MCF 10A (cell line): ENCODE measurements at regions of chr17 and their contacts with region 1.

Region 1: DNA sequence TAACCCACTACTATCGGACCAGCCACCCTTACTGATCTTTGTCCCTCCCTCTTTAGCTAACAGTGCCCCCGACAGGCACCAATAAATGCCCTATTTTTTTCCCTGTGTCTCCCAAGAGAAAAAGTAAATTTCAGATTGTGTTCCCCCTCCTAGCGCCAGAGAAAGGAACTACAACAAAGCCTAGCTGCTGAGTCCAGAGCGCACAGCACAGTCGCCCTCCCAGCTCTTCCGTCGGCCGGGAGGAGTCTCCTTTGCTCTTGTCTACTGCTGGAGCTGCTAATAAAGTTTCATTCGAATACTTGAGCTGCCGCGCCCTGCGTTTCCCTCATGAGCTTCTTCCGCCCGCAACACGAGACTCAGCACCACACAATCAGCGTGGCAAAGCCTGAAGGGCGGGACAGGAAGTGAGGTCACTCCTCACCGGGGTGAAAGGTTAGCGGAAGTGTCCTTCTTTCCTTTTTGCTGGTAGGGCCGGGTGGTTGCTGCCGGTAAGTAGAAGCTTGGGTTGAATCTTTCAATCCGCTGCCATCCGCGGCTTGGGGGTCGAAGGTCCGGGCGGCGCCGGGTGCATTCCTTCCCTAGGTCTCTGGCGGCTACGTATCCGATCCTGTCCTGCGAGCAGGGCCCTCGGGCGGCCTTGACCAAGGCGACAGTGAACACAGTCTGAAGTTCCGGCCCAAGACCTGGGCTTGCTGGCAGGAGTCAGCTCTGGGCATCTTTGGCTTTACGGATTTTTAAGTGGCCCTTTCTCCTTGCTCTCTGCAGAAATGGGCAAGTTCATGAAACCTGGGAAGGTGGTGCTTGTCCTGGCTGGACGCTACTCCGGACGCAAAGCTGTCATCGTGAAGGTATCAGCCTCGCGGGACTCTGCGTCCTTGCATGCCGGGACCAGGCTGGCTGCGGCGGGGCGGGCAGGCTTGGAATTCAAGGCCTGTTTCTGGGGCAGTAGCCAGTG is at the start of gene RPL27:
- DNase-seq: peak; percentile 99
- H3K4me3 Mint-ChIP-seq: peak within 1 kb of the TSS; percentile 95
- H3K27ac Mint-ChIP-seq: peak within 1 kb of the TSS; percentile 96
- H3K4me1 Mint-ChIP-seq: peaks cover 23% of the 10 kb centered on the region
- H3K27me3 Mint-ChIP-seq: no peaks in the 10 kb centered on the region
- CTCF ChIP-seq: peak; percentile 77
- total RNA-seq, gene RPL27: 970 and 1,226 TPM in 2 replicates

Region 2: GRCh38 chr17:42819944-42820535 is 178.2 kb before region 1 on chr17:
- CTCF ChIA-PET with region 1: interaction called, 7 read pairs
- POLR2A ChIA-PET with region 1: interaction called, 19 read pairs
- intact Hi-C with region 1: no loop called
- DNase-seq: peak; percentile 77
- H3K4me3 Mint-ChIP-seq: no peak overlapping the region
- H3K27ac Mint-ChIP-seq: no peak overlapping the region
- H3K4me1 Mint-ChIP-seq: peaks cover 2% of the 10 kb centered on the region
- H3K27me3 Mint-ChIP-seq: no peaks in the 10 kb centered on the region
- CTCF ChIP-seq: peak; percentile 67

Region 3: DNA sequence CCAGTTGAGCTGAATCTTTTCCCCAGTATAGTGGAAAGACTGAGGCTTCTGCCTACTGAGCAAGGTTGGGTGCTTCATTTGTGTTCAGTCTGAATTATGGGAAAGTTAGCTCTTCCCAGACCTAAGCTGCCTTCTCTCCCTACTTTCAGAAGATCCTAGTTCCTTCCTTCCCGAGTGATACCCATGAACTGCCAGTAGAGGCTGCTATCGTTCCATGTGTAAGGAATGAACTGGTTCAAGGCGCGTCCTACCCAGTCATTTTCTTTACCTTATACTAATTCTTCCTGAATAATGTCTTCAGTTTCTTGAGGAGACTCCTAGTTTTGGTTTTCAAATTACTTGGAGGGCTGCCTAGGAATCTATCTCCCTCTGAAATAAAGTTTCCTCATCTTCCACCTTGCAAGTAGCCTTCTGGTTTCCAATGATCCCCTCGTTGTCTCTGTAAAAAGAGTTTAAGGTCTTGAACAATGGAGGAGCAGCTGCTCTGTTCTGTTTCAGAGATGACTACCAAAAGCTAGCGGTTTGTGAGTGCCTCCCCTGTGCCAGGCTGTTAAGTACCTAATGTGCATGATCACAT is 154.8 kb before region 1 on chr17:
- CTCF ChIA-PET with region 1: interaction called, 17 read pairs
- POLR2A ChIA-PET with region 1: interaction called, 11 read pairs
- intact Hi-C with region 1: loop called (anchors 1 kb)
- DNase-seq: peak; percentile 69
- H3K4me3 Mint-ChIP-seq: no peak overlapping the region
- H3K27ac Mint-ChIP-seq: no peak overlapping the region
- H3K4me1 Mint-ChIP-seq: peaks cover 13% of the 10 kb centered on the region
- H3K27me3 Mint-ChIP-seq: no peaks in the 10 kb centered on the region
- CTCF ChIP-seq: peak; percentile 61

Region 4: GRCh38 chr17:42980398-42981397 is 17.6 kb before region 1 on chr17 and contains the start of gene RUNDC1:
- CTCF ChIA-PET with region 1: interaction called, 5 read pairs
- POLR2A ChIA-PET with region 1: interaction called, 47 read pairs
- intact Hi-C with region 1: no loop called
- DNase-seq: peak; percentile 86
- H3K4me3 Mint-ChIP-seq: peak within 1 kb of the TSS; percentile 95
- H3K27ac Mint-ChIP-seq: peak within 1 kb of the TSS; percentile 82
- H3K4me1 Mint-ChIP-seq: peaks cover 12% of the 10 kb centered on the region
- H3K27me3 Mint-ChIP-seq: no peaks in the 10 kb centered on the region
- CTCF ChIP-seq: peak; percentile 36
- total RNA-seq, gene RUNDC1: 13.4 and 14.2 TPM in 2 replicates

Region 5: DNA sequence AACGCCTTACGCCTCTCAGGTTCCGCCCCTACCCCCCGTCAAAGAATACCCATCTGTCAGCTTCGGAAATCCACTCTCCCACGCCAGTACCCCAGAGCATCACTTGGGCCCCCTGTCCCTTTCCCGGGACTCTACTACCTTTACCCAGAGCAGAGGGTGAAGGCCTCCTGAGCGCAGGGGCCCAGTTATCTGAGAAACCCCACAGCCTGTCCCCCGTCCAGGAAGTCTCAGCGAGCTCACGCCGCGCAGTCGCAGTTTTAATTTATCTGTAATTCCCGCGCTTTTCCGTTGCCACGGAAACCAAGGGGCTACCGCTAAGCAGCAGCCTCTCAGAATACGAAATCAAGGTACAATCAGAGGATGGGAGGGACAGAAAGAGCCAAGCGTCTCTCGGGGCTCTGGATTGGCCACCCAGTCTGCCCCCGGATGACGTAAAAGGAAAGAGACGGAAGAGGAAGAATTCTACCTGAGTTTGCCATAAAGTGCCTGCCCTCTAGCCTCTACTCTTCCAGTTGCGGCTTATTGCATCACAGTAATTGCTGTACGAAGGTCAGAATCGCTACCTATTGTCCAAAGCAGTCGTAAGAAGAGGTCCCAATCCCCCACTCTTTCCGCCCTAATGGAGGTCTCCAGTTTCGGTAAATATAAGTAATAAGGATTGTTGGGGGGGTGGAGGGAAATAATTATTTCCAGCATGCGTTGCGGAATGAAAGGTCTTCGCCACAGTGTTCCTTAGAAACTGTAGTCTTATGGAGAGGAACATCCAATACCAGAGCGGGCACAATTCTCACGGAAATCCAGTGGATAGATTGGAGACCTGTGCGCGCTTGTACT is 127.1 kb after region 1 on chr17 and contains the start of gene BRCA1:
- CTCF ChIA-PET with region 1: no interaction called
- POLR2A ChIA-PET with region 1: interaction called, 18 read pairs
- intact Hi-C with region 1: no loop called
- DNase-seq: peak; percentile 99
- H3K4me3 Mint-ChIP-seq: peak within 1 kb of the TSS; percentile 99
- H3K27ac Mint-ChIP-seq: peak within 1 kb of the TSS; percentile 88
- H3K4me1 Mint-ChIP-seq: peaks cover 26% of the 10 kb centered on the region
- H3K27me3 Mint-ChIP-seq: no peaks in the 10 kb centered on the region
- CTCF ChIP-seq: no peak
- total RNA-seq, gene BRCA1: 12.4 and 18.1 TPM in 2 replicates

Region 6: DNA sequence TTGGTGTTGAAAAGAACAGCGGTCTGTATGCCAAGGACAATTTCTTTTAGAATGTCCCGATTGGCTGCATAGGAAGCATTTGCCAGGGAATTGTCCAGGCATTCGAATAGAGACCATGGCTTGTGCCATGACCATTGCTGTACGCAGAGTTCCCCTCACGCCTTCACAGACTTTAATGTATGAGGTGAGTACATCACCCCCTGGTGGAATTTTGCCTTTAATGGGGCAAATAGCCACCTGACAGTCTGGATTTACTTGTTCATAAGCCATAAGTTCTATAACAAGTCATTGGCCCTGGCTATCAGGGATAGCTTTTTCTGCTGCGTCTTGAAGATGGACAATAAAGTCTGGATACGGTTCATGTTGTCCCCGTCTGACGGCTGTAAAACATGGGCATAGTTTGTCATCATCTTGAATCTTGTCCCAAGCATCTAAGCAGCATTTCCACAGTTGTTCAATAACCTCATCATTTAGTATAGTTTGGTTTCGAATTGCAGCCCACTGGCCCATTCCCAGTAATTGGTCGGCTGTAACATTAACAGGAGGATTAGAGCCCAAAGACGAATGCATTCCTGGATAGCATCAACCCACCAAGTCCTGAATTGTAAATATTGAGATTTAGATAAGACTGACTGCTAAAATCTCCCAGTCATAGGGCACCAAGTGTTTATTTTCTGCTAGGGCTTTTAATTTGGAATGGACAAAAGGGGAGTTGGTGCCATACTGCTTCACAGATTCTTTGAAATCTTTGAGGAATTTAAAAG is 332.8 kb after region 1 on chr17:
- CTCF ChIA-PET with region 1: no interaction called
- POLR2A ChIA-PET with region 1: no interaction called
- intact Hi-C with region 1: no loop called
- DNase-seq: no peak
- H3K4me3 Mint-ChIP-seq: no peak overlapping the region
- H3K27ac Mint-ChIP-seq: no peak overlapping the region
- H3K4me1 Mint-ChIP-seq: peaks cover 19% of the 10 kb centered on the region
- H3K27me3 Mint-ChIP-seq: no peaks in the 10 kb centered on the region
- CTCF ChIP-seq: no peak